Left ventricle myocardium superior (tissue), 1 donor: ENCODE measurements at regions of chr12 and their contacts with region 1.

Region 1: DNA sequence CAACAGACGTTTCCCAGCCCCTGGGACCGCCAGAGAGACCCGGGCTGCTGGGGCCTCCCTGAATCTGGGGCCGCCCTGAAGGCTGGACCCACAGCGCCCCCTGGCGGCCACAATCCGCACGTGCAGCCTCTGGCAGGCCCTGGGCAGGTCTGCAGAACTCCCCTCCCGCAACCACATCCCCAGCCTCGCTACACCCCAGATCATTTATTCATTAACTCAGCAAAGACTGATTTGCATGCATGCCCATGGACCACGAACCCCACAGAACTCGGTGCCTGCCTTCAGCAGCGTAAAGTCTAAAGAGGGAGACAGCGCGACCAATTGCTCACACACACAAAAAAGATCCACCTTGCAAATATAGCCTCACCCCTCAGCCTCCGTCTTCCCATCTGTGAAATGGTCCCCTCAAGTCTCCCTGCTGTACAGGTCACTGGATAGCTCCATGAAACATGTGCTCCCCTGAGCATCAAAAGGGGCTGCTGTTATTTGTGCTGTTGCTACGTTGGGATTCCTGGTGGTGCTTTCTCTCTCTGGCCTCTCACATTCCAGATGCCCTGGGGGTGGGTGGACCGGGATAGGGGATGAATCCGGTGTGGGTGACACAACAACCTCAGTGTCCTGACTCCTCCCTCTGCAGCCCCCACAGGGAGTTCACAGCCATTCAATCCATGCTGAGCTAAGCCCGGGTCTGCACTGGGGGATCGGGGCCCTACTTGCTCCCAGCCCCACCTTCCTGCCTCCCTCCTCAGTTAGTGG is 96.4 kb downstream of the SCARB1 start:
- DNase-seq: peak; percentile 90
- ATAC-seq: peak; percentile 72

Region 2: GRCh38 chr12:124036674-124037109 is 730.6 kb before region 1 on chr12:
- intact Hi-C with region 1: loop called (anchors 5 kb)
- DNase-seq: peak; percentile 58
- ATAC-seq: peak; percentile 50

Region 3: DNA sequence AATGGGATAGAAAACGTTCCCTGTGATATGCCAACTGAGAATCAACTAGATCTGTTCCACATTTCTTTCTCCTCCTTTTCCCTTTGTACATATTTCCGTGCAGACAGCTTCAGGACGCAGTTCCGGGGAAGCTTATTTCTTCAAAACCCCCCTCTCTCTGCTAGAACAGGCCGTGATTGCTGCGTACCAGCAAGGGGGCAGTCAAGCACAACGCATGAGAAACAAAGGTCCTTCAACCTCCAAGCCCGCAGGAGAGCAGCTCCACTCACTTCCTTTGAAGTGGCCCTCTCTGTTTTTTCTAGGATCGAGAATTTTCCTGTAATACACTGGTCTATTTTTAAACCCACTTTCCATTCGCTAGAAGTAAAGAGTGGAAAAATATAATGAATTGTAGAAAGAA is 713.4 kb before region 1 on chr12:
- intact Hi-C with region 1: loop called (anchors 5 kb)
- DNase-seq: peak; percentile 45
- ATAC-seq: peak; percentile 91

Region 4: DNA sequence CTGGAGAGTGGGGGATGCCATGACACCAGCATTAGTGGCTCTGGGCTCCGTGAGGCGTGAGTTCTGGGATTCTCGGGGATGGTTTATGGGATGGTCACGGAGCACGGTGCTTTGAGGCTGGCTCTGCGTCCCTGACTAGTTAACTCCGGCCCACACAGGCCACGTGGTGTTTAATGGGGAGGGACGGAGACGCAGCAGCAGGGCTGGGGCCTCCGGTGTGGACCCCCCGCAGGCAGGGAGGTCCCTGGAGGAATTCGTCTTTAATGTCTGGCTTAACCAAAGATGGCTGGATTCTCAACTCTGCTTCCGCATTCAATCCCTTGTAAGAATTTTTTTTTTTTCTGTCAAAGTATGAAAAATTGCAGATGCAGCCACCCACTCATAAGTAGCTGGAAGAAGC is 558.8 kb before region 1 on chr12:
- intact Hi-C with region 1: no loop called
- DNase-seq: no peak
- ATAC-seq: no peak

Region 5: GRCh38 chr12:124311292-124312109 is 455.7 kb before region 1 on chr12:
- intact Hi-C with region 1: loop called (anchors 10 kb)
- DNase-seq: no peak
- ATAC-seq: no peak

Region 6: GRCh38 chr12:124567661-124568373 is 199.4 kb before region 1 on chr12:
- intact Hi-C with region 1: loop called (anchors 5 kb)
- DNase-seq: peak; percentile 98
- ATAC-seq: peak; percentile 86

Region 7: DNA sequence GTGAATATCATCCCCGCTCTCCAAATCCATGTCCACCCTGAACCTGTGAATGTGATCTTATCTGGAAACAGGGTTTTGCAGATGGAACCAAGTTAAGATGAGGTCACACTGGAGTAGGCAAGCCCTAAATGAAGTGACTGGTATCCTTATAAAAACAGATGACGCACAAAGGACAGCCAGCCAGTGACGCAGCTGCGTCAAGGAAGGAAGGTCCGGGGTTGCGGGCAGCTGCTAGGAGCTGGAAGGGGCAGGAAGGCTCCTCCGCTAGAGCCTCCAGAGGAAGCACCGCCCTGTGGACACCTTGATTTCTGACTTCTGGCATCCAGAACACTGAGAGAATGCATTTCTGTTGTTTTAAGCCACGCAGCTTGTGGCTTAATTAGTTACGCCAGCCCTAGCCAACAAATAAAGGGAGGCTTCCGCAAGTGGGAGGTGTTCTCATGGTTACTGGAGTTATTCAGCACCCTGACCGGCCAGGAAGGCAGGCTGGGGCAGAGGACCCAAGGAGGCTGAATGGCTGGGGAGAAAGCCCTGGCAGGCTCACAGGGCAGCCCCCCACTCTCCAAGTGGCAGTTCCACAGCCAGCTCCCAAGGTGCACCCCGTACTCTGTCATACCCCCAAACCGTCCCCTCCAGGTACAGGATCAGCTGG is 72.3 kb before region 1 on chr12:
- intact Hi-C with region 1: loop called (anchors 10 kb)
- DNase-seq: peak; percentile 75
- ATAC-seq: peak; percentile 59

Region 8: GRCh38 chr12:124940549-124941527 is 173.6 kb after region 1 on chr12:
- intact Hi-C with region 1: no loop called
- DNase-seq: peak; percentile 91
- ATAC-seq: peak; percentile 78